Esophagus squamous epithelium (tissue), 5 donors: ENCODE measurements at regions of chr4 and their contacts with region 1.

Region 1: DNA sequence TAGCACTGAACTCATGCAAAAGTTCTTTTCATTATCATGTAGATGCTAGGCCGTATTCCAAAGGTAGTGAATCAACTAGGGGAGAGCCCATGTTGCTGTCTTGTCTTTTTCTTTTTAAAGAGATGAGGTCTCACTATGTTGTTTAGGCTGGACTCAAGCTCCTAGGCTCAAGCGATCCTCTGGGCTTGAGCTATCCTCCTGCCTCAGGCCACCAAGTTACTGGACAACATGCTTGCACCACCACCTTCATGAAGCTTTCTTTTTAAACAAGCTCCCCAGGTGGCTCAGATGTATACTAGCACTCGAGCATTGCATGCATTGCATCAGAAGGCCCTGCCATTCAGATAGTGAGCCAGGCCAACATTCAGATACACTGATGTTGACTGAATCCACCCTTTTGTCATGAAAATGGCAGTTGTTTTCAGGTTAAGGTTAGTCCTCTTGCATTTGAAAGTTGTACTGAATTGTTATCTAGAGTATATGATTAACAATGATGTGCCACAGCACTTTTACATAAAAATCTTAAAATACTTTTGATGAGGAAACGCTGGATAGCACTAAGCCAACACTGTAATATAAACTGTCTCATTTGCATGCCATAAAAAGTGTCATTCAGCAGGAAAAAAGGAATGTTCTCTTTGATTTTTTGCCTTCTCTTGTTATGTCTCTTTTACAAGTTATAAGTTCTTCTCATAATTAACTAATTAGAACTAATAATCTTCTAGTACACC is 76.7 kb downstream of the FNIP2 start:
- DNase-seq: no peak
- H3K4me3 ChIP-seq: no peak overlapping the region
- H3K27ac ChIP-seq: no peak overlapping the region
- H3K4me1 ChIP-seq: peaks cover 0 to 4% (median under 1%) of the 10 kb centered on the region in 3 donors
- H3K27me3 ChIP-seq: no peaks in the 10 kb centered on the region
- CTCF ChIP-seq: no peak
- POLR2A ChIP-seq: no peak

Region 2: GRCh38 chr4:158729716-158730559 is 115.5 kb before region 1 on chr4:
- intact Hi-C with region 1: loop called (anchors 5 kb)
- DNase-seq: no peak
- H3K4me3 ChIP-seq: no peak overlapping the region
- H3K27ac ChIP-seq: no peak overlapping the region
- H3K4me1 ChIP-seq: no peaks in the 10 kb centered on the region
- H3K27me3 ChIP-seq: peaks cover 0 to 14% (median 0%) of the 10 kb centered on the region in 4 donors
- CTCF ChIP-seq: peak; percentile 46 to 90 (median 85)
- POLR2A ChIP-seq: no peak

Region 3: GRCh38 chr4:158768555-158769174 is 76.8 kb before region 1 on chr4 and contains the start of gene FNIP2:
- intact Hi-C with region 1: no loop called
- DNase-seq: peak; percentile 8
- H3K4me3 ChIP-seq: peak within 1 kb of the TSS; percentile 86 to 94 (median 88)
- H3K27ac ChIP-seq: peak within 1 kb of the TSS; percentile 84 to 94 (median 92)
- H3K4me1 ChIP-seq: peaks cover 3 to 56% (median 17%) of the 10 kb centered on the region in 3 donors
- H3K27me3 ChIP-seq: no peaks in the 10 kb centered on the region
- CTCF ChIP-seq: no peak
- POLR2A ChIP-seq: peak in 2 of 4 donors; percentile 47 to 54
- total RNA-seq, gene FNIP2: 6.0 to 28.8 (median 12.4) TPM

Region 4: GRCh38 chr4:158826057-158826456 is 19.4 kb before region 1 on chr4:
- intact Hi-C with region 1: no loop called
- DNase-seq: no peak
- H3K4me3 ChIP-seq: no peak overlapping the region
- H3K27ac ChIP-seq: no peak overlapping the region
- H3K4me1 ChIP-seq: peaks cover 4 to 55% (median 35%) of the 10 kb centered on the region in 3 donors
- H3K27me3 ChIP-seq: no peaks in the 10 kb centered on the region
- CTCF ChIP-seq: no peak
- POLR2A ChIP-seq: no peak

Region 5: DNA sequence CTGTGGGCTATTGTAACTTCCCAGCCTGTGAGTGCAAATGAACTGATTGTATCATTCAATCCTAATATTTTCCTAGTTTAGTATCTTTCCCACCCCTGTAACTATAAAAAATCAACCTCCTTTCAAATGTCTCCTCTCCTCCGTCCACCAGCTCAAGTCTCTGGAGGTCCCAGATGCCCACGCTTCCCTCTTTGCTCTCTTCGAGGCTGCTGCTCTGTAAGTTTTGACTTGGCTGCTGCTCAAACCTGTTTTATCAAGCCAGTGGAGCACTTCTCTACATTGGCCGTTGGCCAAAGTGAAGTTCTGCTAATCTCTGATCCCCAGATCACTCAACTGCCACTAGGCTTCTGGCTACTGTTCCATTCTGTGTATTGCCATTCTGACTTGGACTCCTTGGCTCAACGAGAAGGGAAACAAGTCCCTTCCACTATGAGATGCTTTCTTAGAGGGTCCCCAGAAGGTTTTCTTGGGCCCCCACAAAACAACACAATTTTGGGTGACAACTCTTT is 196.7 kb after region 1 on chr4:
- intact Hi-C with region 1: no loop called
- DNase-seq: no peak
- H3K4me3 ChIP-seq: no peak overlapping the region
- H3K27ac ChIP-seq: no peak overlapping the region
- H3K4me1 ChIP-seq: no peaks in the 10 kb centered on the region
- H3K27me3 ChIP-seq: no peaks in the 10 kb centered on the region
- CTCF ChIP-seq: no peak
- POLR2A ChIP-seq: no peak

Region 6: DNA sequence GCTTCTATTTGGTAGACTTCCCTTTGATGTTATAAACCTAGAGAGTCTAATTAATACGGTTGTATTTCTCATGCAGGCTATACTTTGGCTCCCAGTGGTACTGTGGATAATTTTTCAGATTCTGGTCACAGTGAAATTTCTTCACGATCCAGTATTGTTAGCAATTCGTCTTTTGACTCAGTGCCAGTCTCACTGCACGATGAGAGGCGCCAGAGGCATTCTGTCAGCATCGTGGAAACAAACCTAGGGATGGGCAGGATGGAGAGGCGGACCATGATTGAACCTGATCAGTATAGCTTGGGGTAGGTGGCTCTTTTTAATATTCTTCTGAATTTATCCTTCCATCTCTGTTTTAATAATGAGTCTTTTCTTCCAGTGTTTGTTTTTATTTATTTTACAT is 507.1 kb after region 1 on chr4:
- intact Hi-C with region 1: no loop called
- DNase-seq: no peak
- H3K4me3 ChIP-seq: no peak overlapping the region
- H3K27ac ChIP-seq: no peak overlapping the region
- H3K4me1 ChIP-seq: no peaks in the 10 kb centered on the region
- H3K27me3 ChIP-seq: no peaks in the 10 kb centered on the region
- CTCF ChIP-seq: no peak
- POLR2A ChIP-seq: no peak